Sigmoid colon (tissue), 7 donors: ENCODE measurements at regions of chr10 and their contacts with region 1.

Region 1: GRCh38 chr10:116796910-116797513 is 52.3 kb upstream of the ENO4 start:
- DNase-seq: peak; percentile 77
- H3K4me3 ChIP-seq: no peak overlapping the region
- H3K27ac ChIP-seq: no peak overlapping the region
- H3K4me1 ChIP-seq: no peaks in the 10 kb centered on the region
- H3K27me3 ChIP-seq: peaks cover 0 to 17% (median 7%) of the 10 kb centered on the region in 3 donors
- CTCF ChIP-seq: peak; percentile 45 to 90 (median 83)
- EP300 ChIP-seq: no peak
- POLR2A ChIP-seq: no peak

Region 2: DNA sequence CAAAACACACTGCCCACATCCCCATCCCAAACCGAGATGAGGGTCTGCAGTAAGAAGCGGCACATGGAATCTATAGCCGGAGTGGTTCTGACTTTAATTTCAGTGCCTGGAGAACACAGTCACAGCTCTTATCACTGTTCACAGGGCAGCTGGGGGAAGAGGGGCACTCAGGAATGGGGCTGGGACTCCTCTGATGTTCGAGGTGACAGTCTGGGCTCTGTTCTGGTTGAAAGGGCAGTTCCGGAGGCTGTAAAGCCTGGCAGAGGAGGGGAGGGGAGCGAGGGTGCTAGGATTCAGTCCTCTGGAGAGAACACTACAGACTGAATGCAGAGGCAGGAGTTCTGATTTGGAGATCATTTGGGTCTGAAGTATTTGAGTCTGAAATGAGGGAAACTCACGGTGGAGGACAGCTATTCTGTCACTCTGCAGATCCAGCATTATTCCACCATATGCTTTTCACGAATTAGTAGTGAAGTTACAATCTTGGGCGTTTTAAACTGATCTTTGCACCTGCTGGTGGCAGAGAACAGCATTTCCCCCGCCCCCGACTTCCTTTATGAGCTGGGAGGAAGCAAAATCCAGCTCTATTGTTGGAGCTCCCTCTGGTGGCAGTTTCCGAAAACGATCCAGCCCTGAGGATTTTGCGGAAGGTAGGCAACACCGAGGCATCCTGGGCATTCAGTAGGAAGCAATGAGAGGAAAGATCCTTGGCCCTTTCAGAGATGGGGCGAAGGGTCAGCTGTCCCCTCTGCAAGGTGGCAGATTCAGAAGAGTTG is 377.6 kb after region 1 on chr10:
- intact Hi-C with region 1: loop called (anchors 1 kb)
- DNase-seq: peak; percentile 81
- H3K4me3 ChIP-seq: peak overlapping the region; percentile 19 to 39 (median 36)
- H3K27ac ChIP-seq: no peak overlapping the region
- H3K4me1 ChIP-seq: peaks cover 0 to 13% (median 11%) of the 10 kb centered on the region in 4 donors
- H3K27me3 ChIP-seq: peaks cover 0 to 61% (median 39%) of the 10 kb centered on the region in 3 donors
- CTCF ChIP-seq: peak in 3 of 4 experiments; percentile 62 to 80 (median 72)
- EP300 ChIP-seq: no peak
- POLR2A ChIP-seq: no peak